Calu3 (cell line): ENCODE measurements at regions of chr4 and their contacts with region 1.

Region 1: GRCh38 chr4:69830560-69831289 is 29.2 kb downstream of the SULT1E1 start:
- DNase-seq: peak; percentile 54
- H3K4me3 Mint-ChIP-seq: peak overlapping the region; percentile 54
- H3K27ac Mint-ChIP-seq: peak overlapping the region; percentile 75
- H3K4me1 Mint-ChIP-seq: peaks cover 14% of the 10 kb centered on the region
- H3K27me3 Mint-ChIP-seq: no peaks in the 10 kb centered on the region
- CTCF ChIP-seq: peak; percentile 26

Region 2: GRCh38 chr4:69713593-69713992 is 117.1 kb before region 1 on chr4:
- CTCF ChIA-PET with region 1: no interaction called
- intact Hi-C with region 1: loop called (anchors 10 kb)
- DNase-seq: no peak
- H3K4me3 Mint-ChIP-seq: no peak overlapping the region
- H3K27ac Mint-ChIP-seq: no peak overlapping the region
- H3K4me1 Mint-ChIP-seq: peaks cover 8% of the 10 kb centered on the region
- H3K27me3 Mint-ChIP-seq: no peaks in the 10 kb centered on the region
- CTCF ChIP-seq: no peak

Region 3: DNA sequence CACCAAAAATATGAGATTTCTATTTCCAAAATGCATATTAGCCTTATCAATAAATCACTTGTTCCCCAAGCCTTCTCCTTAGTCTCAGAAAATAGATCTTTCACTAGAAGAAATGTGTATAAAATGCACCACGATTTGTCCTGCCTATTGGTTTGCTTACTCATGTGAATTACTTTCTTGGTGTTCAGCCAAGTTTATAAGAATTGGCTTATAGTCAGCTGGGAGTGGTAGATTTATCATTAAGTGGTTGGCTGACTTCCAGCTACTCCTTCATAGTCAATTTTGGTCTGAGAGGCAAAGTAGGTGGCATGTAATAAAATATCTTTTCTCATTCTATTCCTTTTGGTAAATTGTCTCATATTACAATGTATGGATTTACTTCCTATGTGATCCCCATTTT is 28.0 kb after region 1 on chr4:
- CTCF ChIA-PET with region 1: interaction called, 3 read pairs
- intact Hi-C with region 1: loop called (anchors 2 kb)
- DNase-seq: peak; percentile 14
- H3K4me3 Mint-ChIP-seq: no peak overlapping the region
- H3K27ac Mint-ChIP-seq: no peak overlapping the region
- H3K4me1 Mint-ChIP-seq: no peaks in the 10 kb centered on the region
- H3K27me3 Mint-ChIP-seq: no peaks in the 10 kb centered on the region
- CTCF ChIP-seq: no peak

Region 4: GRCh38 chr4:69881173-69881773 is 50.5 kb after region 1 on chr4:
- CTCF ChIA-PET with region 1: interaction called, 3 read pairs
- intact Hi-C with region 1: loop called (anchors 1 kb)
- DNase-seq: peak; percentile 6
- H3K4me3 Mint-ChIP-seq: no peak overlapping the region
- H3K27ac Mint-ChIP-seq: no peak overlapping the region
- H3K4me1 Mint-ChIP-seq: peaks cover 22% of the 10 kb centered on the region
- H3K27me3 Mint-ChIP-seq: no peaks in the 10 kb centered on the region
- CTCF ChIP-seq: peak; percentile 61

Region 5: DNA sequence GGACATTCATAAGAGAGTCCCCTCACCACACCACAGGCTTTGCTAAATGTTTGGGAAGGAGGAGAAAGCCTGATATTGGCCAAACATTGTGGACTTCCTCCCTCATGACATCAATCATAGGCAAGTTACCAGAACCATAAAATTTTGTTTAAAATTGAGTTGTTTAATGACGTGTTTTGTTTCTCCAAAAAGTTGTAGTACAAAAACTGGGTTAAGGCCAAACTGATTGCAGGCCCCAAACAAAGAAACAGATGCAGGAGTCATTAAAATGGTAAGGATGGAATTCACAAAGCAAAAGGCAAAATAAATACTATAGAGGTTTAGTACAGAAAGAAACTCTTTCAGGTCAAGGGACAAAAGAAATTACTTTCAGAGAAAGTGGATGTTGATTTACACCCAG is 360.9 kb after region 1 on chr4:
- CTCF ChIA-PET with region 1: no interaction called
- intact Hi-C with region 1: loop called (anchors 5 kb)
- DNase-seq: no peak
- H3K4me3 Mint-ChIP-seq: no peak overlapping the region
- H3K27ac Mint-ChIP-seq: peak overlapping the region; percentile 91
- H3K4me1 Mint-ChIP-seq: peaks cover 23% of the 10 kb centered on the region
- H3K27me3 Mint-ChIP-seq: no peaks in the 10 kb centered on the region
- CTCF ChIP-seq: no peak

Region 6: DNA sequence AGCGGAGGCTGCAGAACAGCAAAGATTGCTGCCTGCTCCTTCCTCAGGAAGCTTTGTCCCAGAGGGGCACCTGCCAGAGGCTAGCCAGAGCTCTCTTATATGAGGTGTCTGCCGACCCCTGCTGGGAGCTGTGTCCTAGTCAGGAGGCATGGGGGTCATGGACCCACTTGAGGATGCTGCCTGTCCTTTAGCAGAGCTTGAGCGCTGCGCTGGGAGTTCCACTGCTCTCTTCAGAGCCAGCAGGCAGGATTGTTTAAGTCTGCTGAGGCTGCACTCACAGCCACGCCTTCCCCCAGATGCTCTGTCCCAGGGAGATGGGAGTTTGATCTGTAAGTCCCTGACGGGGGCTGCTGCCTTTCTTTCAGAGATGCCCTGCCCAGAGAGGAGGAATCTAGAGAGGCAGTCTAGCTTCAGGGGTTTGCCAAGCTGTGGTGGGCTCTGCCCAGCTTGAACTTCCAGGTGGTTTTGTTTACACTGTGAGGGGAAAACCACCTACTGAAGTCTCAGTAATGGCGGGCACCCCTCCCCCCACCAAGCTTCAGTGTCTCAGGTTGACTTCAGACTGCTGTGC is 1173.6 kb after region 1 on chr4:
- CTCF ChIA-PET with region 1: no interaction called
- intact Hi-C with region 1: no loop called
- DNase-seq: no peak
- H3K4me3 Mint-ChIP-seq: no peak overlapping the region
- H3K27ac Mint-ChIP-seq: no peak overlapping the region
- H3K4me1 Mint-ChIP-seq: peaks cover 10% of the 10 kb centered on the region
- H3K27me3 Mint-ChIP-seq: no peaks in the 10 kb centered on the region
- CTCF ChIP-seq: no peak